ENCODE measurements at regions of chr6 and their contacts with region 1.

Region 1: GRCh38 chr6:1596088-1596852 is 13.4 kb upstream of the FOXC1 start:
- DNase-seq: peak; percentile 86
- CTCF ChIP-seq: peak; percentile 79

Region 2: DNA sequence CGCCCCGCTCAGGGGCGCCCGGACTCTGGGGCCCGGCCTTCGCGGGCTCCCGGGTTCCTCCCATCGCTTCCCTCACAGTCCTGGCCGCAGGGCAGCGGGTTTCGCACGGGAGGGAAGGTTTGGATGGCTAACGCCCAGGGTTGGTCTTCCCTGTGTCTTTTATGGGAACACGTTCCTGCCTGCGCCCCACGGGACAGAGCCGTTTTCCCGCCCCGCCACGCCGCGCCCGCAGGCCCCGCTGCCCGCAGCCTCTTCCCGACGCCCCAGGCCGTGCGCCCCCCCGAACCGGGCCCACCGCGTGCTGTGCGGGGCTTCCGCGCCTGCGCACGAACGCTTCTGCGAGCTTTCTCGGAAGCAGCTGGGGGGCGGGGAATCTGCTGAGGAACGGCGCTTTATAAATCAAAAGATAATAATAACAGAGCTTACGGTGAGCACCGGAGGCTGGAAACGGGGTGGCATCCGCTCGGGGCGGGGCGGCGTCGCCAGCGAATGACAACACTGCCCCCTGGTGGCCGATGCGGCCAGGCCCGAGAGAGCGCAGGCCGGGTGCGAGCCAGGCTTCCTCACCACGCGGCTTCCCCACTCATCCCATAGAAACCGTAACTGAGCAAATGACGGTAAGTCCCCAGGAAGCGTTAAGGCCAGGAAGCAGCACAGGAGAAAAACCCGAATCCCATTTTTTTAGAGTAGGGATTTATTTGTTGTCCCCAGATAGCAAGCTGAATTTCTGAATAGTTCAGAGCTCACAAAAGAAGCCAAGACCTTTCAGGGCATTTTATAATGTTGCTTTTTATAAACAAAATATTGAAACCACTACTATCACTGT is 1038.1 kb after region 1 on chr6:
- in situ Hi-C with region 1: loop called (anchors 25 kb)
- DNase-seq: peak; percentile 89
- CTCF ChIP-seq: peak; percentile 93